Endothelial cell of umbilical vein (primary cell): ENCODE measurements at regions of chrX and their contacts with region 1.

Region 1: DNA sequence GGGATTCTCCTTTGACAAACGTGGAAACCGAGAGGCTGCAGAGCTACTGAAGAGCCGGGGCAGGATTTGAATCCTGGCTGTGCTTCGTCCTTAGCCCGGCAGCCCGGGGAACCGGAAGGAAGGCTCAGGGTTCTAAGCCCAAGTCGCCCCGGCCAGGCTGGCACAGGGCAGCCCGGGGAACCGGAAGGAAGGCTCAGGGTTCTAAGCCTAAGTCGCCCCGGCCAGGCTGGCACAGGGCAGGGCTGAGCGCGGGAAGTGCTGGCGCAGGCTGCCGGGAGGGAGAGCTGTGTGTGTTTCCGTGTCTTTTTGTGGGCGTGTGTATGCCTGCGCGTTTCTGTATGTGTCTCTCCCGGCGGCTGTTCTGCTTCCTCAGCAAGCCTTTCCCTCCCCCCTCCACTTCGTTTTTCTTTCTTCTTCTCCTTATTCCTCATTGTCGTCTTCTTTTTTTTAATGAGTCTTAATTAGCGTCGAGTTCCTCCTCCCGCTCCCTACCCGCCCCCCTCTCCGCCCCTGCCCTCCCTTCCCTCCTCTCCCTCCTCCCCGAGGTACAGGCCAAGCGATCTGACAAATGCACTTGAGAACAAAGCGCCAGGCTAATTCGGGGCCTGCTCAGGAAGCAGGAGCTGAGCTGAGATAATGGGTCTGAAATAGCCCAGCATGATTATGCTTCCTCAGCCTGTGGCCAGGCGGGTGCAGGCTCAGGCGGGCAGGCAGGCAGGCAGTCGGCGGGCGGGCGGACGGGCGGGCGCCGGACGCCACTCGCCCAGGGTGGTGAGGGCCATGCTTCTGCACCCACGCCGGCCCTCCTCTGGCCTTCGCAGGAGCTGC is 65.9 kb downstream of the EFNB1 start:
- DNase-seq: peak; percentile 88
- H3K4me3 ChIP-seq: no peak overlapping the region
- H3K27ac ChIP-seq: peak overlapping the region; percentile 65
- H3K4me1 ChIP-seq: peaks cover 15% of the 10 kb centered on the region
- H3K27me3 ChIP-seq: no peaks in the 10 kb centered on the region
- CTCF ChIP-seq: no peak
- POLR2A ChIP-seq: no peak

Region 2: DNA sequence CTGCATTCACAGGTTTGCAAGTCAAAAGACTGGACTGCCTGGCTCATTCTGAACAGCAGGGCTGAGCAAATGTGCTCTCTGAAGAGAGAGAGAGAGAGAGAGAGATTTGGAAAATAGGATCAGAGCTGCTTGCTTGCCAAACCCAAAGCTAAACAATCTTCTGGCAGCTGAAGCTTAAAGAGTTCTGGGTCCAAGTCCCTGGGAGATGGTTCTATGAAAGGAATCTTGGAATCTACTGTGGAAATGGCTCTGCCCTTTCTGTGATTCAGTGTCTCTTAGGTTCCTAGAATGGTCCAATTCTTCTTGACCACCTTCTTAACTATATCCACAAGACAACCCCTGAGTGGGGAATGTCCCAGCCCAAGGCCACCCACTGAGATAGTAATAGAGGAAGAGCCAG is 132.0 kb before region 1 on chrX:
- CTCF ChIA-PET with region 1: no interaction called
- POLR2A ChIA-PET with region 1: no interaction called
- dilution Hi-C with region 1: no loop called
- intact Hi-C with region 1: no loop called
- DNase-seq: no peak
- H3K4me3 ChIP-seq: no peak overlapping the region
- H3K27ac ChIP-seq: no peak overlapping the region
- H3K4me1 ChIP-seq: no peaks in the 10 kb centered on the region
- H3K27me3 ChIP-seq: no peaks in the 10 kb centered on the region
- CTCF ChIP-seq: no peak
- POLR2A ChIP-seq: no peak

Region 3: GRCh38 chrX:68929332-68930150 is 34.8 kb after region 1 on chrX:
- CTCF ChIA-PET with region 1: interaction called, 6 read pairs
- POLR2A ChIA-PET with region 1: interaction called, 5 read pairs
- dilution Hi-C with region 1: no loop called
- intact Hi-C with region 1: loop called (anchors 1 kb)
- DNase-seq: peak; percentile 57
- H3K4me3 ChIP-seq: no peak overlapping the region
- H3K27ac ChIP-seq: peak overlapping the region; percentile 41
- H3K4me1 ChIP-seq: peaks cover 28% of the 10 kb centered on the region
- H3K27me3 ChIP-seq: no peaks in the 10 kb centered on the region
- CTCF ChIP-seq: no peak
- POLR2A ChIP-seq: no peak

Region 4: DNA sequence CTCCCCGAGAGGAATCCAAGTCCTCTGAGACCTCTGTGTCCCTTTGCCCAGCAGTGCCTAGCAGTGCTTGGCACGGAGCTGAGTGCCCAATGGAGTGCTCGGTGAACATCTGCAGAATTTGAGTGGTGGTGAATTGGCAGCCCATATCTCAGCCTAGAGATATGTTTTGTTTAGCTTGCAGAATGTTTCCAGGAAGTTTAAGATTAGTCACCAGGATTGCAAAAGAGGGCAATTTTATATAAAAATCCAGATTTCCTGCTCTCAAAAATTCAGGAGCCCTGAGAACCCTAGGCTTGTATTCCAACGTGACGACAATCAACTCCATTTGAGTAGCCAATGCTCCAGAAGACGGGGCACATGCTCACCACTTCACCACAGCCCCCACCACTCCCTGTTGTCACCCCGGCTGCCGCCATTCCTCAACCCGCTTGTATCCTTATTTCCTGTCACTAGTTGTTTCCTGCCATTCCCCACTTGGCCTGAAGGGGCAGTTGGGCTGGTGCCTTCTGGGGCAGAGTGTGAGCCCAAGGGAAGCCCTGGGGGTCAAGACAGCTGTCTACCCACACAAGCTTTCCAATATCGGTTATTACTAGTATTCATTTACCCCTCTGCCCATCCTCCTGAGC is 51.0 kb after region 1 on chrX:
- CTCF ChIA-PET with region 1: no interaction called
- POLR2A ChIA-PET with region 1: no interaction called
- dilution Hi-C with region 1: no loop called
- intact Hi-C with region 1: loop called (anchors 2 kb)
- DNase-seq: peak; percentile 54
- H3K4me3 ChIP-seq: no peak overlapping the region
- H3K27ac ChIP-seq: peak overlapping the region; percentile 16
- H3K4me1 ChIP-seq: peaks cover 9% of the 10 kb centered on the region
- H3K27me3 ChIP-seq: no peaks in the 10 kb centered on the region
- CTCF ChIP-seq: peak; percentile 27 to 41
- POLR2A ChIP-seq: no peak